ENCODE measurements at regions of chr16 and their contacts with region 1.

Region 1: GRCh38 chr16:81896900-81897299 is 114.4 kb downstream of the SDR42E1 start:
- DNase-seq: no peak
- ATAC-seq: no peak
- H3K4me3 ChIP-seq: no peak overlapping the region
- H3K27ac ChIP-seq: no peak overlapping the region
- H3K4me1 ChIP-seq: no peaks in the 10 kb centered on the region
- H3K27me3 ChIP-seq: peaks cover 3% of the 10 kb centered on the region
- CTCF ChIP-seq: no peak
- POLR2A ChIP-seq: no peak
- RAD21 ChIP-seq: no peak

Region 2: GRCh38 chr16:81956213-81956948 is 59.5 kb after region 1 on chr16:
- CTCF ChIA-PET with region 1: no interaction called
- POLR2A ChIA-PET with region 1: no interaction called
- dilution Hi-C with region 1: no loop called
- in situ Hi-C with region 1: no loop called
- intact Hi-C with region 1: loop called (anchors 10 kb)
- DNase-seq: no peak
- ATAC-seq: no peak
- H3K4me3 ChIP-seq: no peak overlapping the region
- H3K27ac ChIP-seq: no peak overlapping the region
- H3K4me1 ChIP-seq: no peaks in the 10 kb centered on the region
- H3K27me3 ChIP-seq: peaks cover 2% of the 10 kb centered on the region; the same call in 1 of the 2 replicates
- CTCF ChIP-seq: no peak
- POLR2A ChIP-seq: no peak
- RAD21 ChIP-seq: no peak